Activated naive CD4-positive, alpha-beta T cell treated with anti-CD3 and anti-CD28 coated beads for 36 hours (primary cell): ENCODE measurements at regions of chr1 and their contacts with region 1.

Region 1: DNA sequence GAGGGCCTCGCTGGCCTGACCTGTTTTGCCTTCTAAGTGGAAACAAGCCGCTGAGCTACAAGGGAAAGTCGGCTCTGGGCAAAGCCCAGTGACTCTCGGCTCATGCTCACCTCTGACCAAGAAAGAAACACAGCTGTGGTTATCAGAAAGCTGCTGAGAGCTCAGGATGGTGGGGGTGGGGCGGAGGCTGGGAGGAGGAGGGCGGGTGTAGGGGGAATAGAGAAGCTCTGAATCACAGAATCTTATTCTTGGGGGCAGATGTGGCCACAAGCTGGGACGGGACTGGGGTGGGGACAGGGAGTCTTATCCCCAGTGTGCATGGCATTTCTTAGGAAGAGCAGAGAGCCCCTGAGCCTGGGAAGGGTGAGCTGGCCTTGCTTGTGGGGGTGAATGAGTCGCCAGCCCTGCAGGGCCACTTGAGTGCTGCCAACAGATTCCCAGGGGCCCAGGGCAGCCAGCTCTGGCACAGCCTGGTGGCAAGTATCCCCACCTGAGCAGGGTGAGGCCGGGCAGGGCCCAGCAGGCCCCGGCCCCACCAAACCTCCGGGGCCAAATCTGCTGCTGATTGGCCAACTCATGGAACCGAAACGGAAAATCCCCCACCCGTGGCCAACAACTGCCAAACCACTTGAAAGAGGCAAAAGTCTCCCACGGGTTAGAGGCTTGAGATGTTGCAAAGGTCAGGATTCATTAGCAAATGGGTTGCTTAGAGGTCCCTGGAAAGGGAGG is 120.6 kb downstream of the SPSB1 start:
- DNase-seq: peak; percentile 89
- H3K4me3 Mint-ChIP-seq: no peak overlapping the region
- H3K27ac Mint-ChIP-seq: no peak overlapping the region
- H3K4me1 Mint-ChIP-seq: peaks cover 46% of the 10 kb centered on the region
- H3K27me3 Mint-ChIP-seq: no peaks in the 10 kb centered on the region

Region 2: DNA sequence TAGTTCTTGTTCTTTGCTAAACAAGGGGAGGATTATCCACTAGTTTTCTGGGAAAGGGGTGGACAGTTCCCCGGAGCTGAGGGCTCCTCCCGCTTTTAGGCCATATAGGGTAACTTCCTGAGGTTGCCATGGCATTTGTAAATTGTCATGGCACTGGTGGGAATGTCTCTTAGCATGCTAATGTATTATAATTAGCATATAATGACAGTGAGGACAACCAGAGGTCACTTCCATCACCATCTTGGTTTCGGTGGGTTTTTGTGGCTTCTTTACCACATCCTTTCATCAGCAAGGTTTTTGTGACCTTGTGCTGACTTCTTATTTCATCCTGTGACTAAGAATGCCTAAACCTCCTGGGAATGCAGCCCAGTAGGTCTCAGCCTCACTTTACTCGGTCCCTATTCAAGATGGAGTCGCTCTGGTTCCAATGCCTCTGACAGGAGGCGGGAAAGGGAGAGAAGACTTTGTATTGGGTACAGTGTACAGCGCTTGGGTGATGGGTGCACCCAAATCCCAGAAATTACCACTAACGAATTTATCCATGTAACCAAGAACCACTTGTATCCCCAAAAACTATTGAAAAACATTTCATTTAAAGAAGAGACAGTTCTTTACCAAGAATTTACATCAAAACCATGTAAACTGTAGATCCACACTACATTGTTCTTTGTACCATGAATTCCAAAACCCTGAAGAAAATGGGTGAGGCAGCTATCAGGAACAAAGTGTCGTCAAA is 335.1 kb before region 1 on chr1:
- CTCF ChIA-PET with region 1: no interaction called
- intact Hi-C with region 1: no loop called
- DNase-seq: peak; percentile 12
- H3K4me3 Mint-ChIP-seq: no peak overlapping the region
- H3K27ac Mint-ChIP-seq: no peak overlapping the region
- H3K4me1 Mint-ChIP-seq: peaks cover 29% of the 10 kb centered on the region
- H3K27me3 Mint-ChIP-seq: peaks cover 6% of the 10 kb centered on the region

Region 3: GRCh38 chr1:9315411-9316079 is 97.8 kb before region 1 on chr1:
- CTCF ChIA-PET with region 1: no interaction called
- intact Hi-C with region 1: loop called (anchors 1 kb)
- DNase-seq: peak; percentile 79
- H3K4me3 Mint-ChIP-seq: peak overlapping the region; percentile 30
- H3K27ac Mint-ChIP-seq: peak overlapping the region; percentile 83
- H3K4me1 Mint-ChIP-seq: peaks cover 39% of the 10 kb centered on the region
- H3K27me3 Mint-ChIP-seq: no peaks in the 10 kb centered on the region